ENCODE measurements at regions of chr7 and their contacts with region 1.

Region 1: GRCh38 chr7:974820-975681 is at the start of gene COX19:
- DNase-seq: peak; percentile 87 to 94 (median 88)
- H3K4me3 ChIP-seq: peak within 1 kb of the TSS; percentile 58 to 94
- H3K4me3 Mint-ChIP-seq: peak within 1 kb of the TSS; percentile 89 to 96 (median 94)
- H3K27ac ChIP-seq: peak within 1 kb of the TSS; percentile 99
- H3K27ac Mint-ChIP-seq: peak within 1 kb of the TSS; percentile 90 to 97 (median 93)
- H3K4me1 ChIP-seq: peaks cover 38% of the 10 kb centered on the region
- H3K4me1 Mint-ChIP-seq: peaks cover 13 to 37% (median 26%) of the 10 kb centered on the region in 4 donors
- H3K27me3 ChIP-seq: no peaks in the 10 kb centered on the region
- H3K27me3 Mint-ChIP-seq: no peaks in the 10 kb centered on the region
- total RNA-seq, gene COX19: 46.2 to 50.0 TPM

Region 2: DNA sequence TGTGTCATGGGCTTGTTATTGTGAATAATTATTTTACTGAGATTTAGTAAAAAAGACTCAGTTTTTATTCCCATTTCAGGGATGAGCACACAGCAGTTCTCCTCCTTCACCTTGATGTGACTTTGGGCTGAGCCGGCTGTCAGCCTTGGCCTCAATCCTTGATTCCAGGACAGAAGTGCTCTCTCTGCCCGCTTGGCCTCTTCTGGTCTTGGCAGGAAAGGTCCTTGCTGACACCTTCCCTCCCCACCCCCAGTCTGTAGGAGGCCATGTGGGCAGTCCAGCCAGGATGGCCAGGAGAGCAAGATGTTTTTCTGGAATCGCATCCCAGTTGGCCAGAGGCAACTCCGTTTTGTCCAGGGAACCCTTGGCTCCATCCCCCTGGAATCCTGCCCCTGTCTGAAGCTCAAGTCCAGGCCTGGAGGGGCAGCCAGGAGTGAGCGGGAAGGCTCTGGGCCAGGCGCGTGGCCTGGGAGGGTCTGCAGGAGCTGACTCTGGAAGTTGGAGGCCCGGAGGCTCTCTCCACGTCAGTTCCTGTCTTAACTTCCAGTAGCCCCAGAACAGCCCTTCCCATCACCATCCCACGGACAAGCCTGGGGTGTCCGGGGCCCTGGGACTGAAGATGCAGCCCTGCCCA is 556.3 kb before region 1 on chr7:
- CTCF ChIA-PET with region 1: no interaction called
- POLR2A ChIA-PET with region 1: no interaction called
- intact Hi-C with region 1: no loop called
- DNase-seq: no peak
- H3K4me3 ChIP-seq: no peak overlapping the region
- H3K4me3 Mint-ChIP-seq: no peak overlapping the region
- H3K27ac ChIP-seq: no peak overlapping the region
- H3K27ac Mint-ChIP-seq: no peak overlapping the region
- H3K4me1 ChIP-seq: no peaks in the 10 kb centered on the region
- H3K4me1 Mint-ChIP-seq: no peaks in the 10 kb centered on the region
- H3K27me3 ChIP-seq: no peaks in the 10 kb centered on the region
- H3K27me3 Mint-ChIP-seq: no peaks in the 10 kb centered on the region

Region 3: DNA sequence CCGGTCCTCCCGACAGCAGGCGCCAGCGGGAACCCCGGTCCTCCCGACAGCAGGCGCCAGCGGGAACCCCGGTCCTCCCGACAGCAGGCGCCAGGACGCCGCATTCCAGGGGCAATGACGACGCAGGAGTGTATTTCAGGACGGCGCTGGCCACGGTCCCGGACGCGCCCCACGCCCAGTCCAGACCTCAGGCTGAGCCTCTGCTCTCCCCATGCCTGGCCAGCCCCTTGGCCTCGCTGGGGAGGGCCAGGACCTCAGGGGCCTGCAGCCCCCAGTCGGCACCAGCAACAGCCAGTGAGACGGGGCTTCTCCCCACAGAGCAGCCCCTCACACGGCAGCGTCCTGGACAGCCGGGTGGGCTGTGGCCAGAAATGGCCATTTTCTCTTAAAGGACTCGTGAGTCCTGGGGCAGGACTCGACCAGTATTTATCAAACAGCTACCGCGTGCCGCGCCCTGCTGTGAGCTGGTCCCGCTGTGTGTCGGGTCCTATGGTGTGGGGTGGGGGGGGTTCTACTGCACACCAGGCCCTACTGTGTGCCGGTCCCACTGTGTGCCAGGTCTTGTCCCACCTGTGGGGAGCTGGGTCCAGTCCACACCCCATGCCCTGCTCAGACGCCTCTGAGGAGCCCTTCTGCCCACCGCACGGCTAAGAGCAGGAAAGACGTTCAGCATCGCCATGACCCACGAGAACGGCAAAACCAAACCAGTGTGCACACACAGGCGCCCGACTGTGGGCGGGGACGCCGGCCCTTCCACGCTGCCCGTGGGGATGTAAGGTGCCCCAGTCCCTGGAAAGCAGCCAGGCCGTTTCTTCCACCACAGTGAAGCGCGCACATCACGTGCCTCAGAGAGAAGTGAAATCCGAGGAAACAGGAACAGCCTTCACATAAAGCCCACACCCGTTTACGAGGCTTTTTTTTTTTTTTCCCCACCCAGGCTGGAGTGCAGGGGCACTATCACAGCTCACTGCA is 65.4 kb before region 1 on chr7:
- CTCF ChIA-PET with region 1: interaction called, 13 read pairs
- POLR2A ChIA-PET with region 1: interaction called, 6 read pairs
- intact Hi-C with region 1: no loop called
- DNase-seq: peak in 1 of 5 donors; percentile 46
- H3K4me3 ChIP-seq: no peak overlapping the region
- H3K4me3 Mint-ChIP-seq: peak overlapping the region; percentile 35 to 77 (median 72)
- H3K27ac ChIP-seq: no peak overlapping the region
- H3K27ac Mint-ChIP-seq: peak overlapping the region in 3 of 7 donors; percentile 65 to 68 (median 67)
- H3K4me1 ChIP-seq: peaks cover 10% of the 10 kb centered on the region
- H3K4me1 Mint-ChIP-seq: peaks cover 2 to 14% (median 10%) of the 10 kb centered on the region in 4 donors
- H3K27me3 ChIP-seq: no peaks in the 10 kb centered on the region
- H3K27me3 Mint-ChIP-seq: no peaks in the 10 kb centered on the region

Region 4: DNA sequence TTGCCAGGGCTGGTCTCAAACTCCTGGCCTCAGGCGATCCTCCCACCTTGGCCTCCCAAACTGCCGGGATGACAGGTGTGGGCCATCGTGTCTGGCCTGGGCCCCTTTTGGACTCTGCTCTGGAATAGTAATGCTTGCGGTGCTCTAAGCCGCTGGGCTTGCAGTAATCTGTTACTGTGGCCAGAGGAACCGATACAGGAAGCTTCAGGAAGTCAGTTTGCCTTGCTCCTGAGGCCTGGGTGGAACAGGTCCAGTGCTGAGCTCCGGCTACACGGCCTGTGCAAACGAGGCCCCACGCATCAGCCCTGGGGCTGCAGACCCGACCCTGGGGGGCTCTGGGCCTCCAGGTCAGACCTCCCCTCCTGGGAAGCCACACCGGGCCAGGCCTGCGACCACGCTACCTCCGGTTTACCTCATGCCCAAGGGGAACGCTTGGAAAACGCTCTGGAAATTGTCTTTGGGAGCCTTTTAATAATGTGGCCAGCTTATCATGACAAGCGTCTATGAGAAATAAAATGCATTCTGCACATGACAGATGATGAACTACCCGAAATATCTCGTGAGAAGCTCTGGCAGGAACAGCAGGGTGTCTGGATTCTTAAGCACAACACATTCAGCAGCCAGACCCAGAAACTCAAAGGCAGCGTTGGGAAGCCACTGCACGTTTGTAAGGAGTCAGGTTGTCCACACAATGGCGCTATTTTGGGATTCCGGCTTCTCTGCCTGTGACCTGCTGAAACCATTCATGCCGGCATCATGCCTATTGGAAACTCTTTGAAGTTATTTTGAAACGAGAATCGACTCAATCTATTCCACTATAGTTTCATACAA is 10.4 kb before region 1 on chr7:
- CTCF ChIA-PET with region 1: interaction called, 3 read pairs
- POLR2A ChIA-PET with region 1: interaction called, 12 read pairs
- intact Hi-C with region 1: no loop called
- DNase-seq: peak in 1 of 5 donors; percentile 9
- H3K4me3 ChIP-seq: no peak overlapping the region
- H3K4me3 Mint-ChIP-seq: peak overlapping the region in 2 of 8 donors; percentile 35 to 40
- H3K27ac ChIP-seq: no peak overlapping the region
- H3K27ac Mint-ChIP-seq: peak overlapping the region in 3 of 7 donors; percentile 27 to 70 (median 51)
- H3K4me1 ChIP-seq: peaks cover 24% of the 10 kb centered on the region
- H3K4me1 Mint-ChIP-seq: peaks cover 10 to 32% (median 22%) of the 10 kb centered on the region in 4 donors
- H3K27me3 ChIP-seq: no peaks in the 10 kb centered on the region
- H3K27me3 Mint-ChIP-seq: peaks cover 7 to 11% of the 10 kb centered on the region in 2 donors

Region 5: GRCh38 chr7:1028031-1028770 is 53.1 kb after region 1 on chr7:
- CTCF ChIA-PET with region 1: no interaction called
- POLR2A ChIA-PET with region 1: interaction called, 3 read pairs
- intact Hi-C with region 1: loop called (anchors 2 kb)
- DNase-seq: peak; percentile 80 to 86 (median 83)
- H3K4me3 ChIP-seq: peak overlapping the region; percentile 57 to 64
- H3K4me3 Mint-ChIP-seq: peak overlapping the region; percentile 65 to 90 (median 81)
- H3K27ac ChIP-seq: peak overlapping the region; percentile 76
- H3K27ac Mint-ChIP-seq: peak overlapping the region; percentile 82 to 95 (median 91)
- H3K4me1 ChIP-seq: peaks cover 35% of the 10 kb centered on the region
- H3K4me1 Mint-ChIP-seq: peaks cover 22 to 53% (median 36%) of the 10 kb centered on the region in 4 donors
- H3K27me3 ChIP-seq: no peaks in the 10 kb centered on the region
- H3K27me3 Mint-ChIP-seq: no peaks in the 10 kb centered on the region

Region 6: GRCh38 chr7:1159891-1160668 is 185.0 kb after region 1 on chr7 and contains the start of gene ZFAND2A:
- CTCF ChIA-PET with region 1: no interaction called
- POLR2A ChIA-PET with region 1: interaction called, 4 read pairs
- intact Hi-C with region 1: loop called (anchors 1 kb)
- DNase-seq: peak; percentile 97 to 98 (median 98)
- H3K4me3 ChIP-seq: peak within 1 kb of the TSS; percentile 69 to 99
- H3K4me3 Mint-ChIP-seq: peak within 1 kb of the TSS; percentile 88 to 94 (median 90)
- H3K27ac ChIP-seq: peak within 1 kb of the TSS; percentile 90
- H3K27ac Mint-ChIP-seq: peak within 1 kb of the TSS; percentile 79 to 98 (median 95)
- H3K4me1 ChIP-seq: peaks cover 29% of the 10 kb centered on the region
- H3K4me1 Mint-ChIP-seq: peaks cover 15 to 30% (median 23%) of the 10 kb centered on the region in 4 donors
- H3K27me3 ChIP-seq: no peaks in the 10 kb centered on the region
- H3K27me3 Mint-ChIP-seq: no peaks in the 10 kb centered on the region
- total RNA-seq, gene ZFAND2A: 30.9 to 32.4 TPM